Activated naive CD4-positive, alpha-beta T cell treated with anti-CD3 and anti-CD28 coated beads for 36 hours (primary cell): ENCODE measurements at regions of chr1 and their contacts with region 1.

Region 1: DNA sequence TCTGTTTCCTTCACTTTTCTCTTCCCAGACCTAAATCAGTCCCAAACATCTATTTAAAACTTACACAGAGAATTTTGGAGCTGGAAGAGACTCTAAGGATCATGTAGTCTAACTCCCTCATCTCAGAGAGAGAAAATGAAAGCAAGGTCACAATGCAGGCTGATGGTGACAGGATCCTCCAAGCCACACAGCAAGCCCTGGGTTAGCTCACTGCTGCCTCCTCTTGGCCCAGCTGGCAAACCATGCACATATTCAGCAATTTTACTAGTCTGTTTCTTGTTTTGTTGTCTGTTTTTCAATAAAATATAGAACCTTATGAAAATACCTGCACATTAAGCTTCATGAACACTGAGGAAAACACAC is 27.7 kb upstream of the LY9 start:
- DNase-seq: peak; percentile 96
- H3K4me3 Mint-ChIP-seq: peak overlapping the region; percentile 79
- H3K27ac Mint-ChIP-seq: peak overlapping the region; percentile 99
- H3K4me1 Mint-ChIP-seq: peaks cover 68% of the 10 kb centered on the region
- H3K27me3 Mint-ChIP-seq: no peaks in the 10 kb centered on the region

Region 2: DNA sequence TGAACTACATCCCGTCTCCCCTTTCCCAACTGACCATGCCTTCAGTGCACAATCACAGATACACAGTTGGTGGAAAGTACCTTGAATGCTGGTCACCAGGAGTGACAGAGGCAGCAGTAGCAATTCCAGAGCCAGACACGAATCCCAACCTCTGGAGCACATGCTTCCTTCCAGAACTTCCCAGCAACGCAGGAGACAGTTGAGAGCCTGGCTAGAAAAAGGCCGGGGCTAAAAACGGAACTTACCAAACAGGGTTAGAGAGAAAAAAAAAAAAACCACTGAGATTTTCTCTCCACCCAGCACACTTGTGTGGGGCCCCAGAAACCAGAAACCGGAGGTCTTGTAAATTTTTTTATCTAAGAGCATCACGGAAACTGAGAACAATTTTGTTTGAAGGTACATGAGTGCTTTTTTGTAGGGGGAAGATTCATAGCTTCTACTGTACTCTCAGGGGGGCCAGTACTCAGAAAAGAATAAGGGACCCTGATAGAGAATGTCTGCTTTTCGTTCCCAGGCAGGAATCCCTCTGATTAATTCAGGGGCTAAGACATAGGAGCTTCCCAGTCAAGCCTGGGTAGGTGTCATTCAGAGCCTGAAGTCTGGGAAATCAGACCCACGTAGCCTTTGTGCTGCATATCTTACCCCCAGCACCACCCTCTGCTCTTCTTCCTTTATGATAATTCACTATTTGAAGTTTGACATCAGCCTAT is 56.5 kb before region 1 on chr1 and contains the start of gene CD48:
- CTCF ChIA-PET with region 1: interaction called, 19 read pairs
- intact Hi-C with region 1: loop called (anchors 1 kb)
- DNase-seq: peak; percentile 70
- H3K4me3 Mint-ChIP-seq: no peak within 1 kb of the TSS
- H3K27ac Mint-ChIP-seq: no peak within 1 kb of the TSS
- H3K4me1 Mint-ChIP-seq: peaks cover 28% of the 10 kb centered on the region
- H3K27me3 Mint-ChIP-seq: no peaks in the 10 kb centered on the region
- total RNA-seq, gene CD48: 338 to 340 TPM

Region 3: GRCh38 chr1:160731990-160732389 is 36.3 kb before region 1 on chr1:
- CTCF ChIA-PET with region 1: interaction called, 174 read pairs
- intact Hi-C with region 1: loop called (anchors 1 kb)
- DNase-seq: no peak
- H3K4me3 Mint-ChIP-seq: no peak overlapping the region
- H3K27ac Mint-ChIP-seq: peak overlapping the region; percentile 90
- H3K4me1 Mint-ChIP-seq: peaks cover 48% of the 10 kb centered on the region
- H3K27me3 Mint-ChIP-seq: no peaks in the 10 kb centered on the region

Region 4: GRCh38 chr1:160748181-160748877 is 19.9 kb before region 1 on chr1:
- CTCF ChIA-PET with region 1: interaction called, 24 read pairs
- intact Hi-C with region 1: loop called (anchors 1 kb)
- DNase-seq: peak; percentile 28
- H3K4me3 Mint-ChIP-seq: no peak overlapping the region
- H3K27ac Mint-ChIP-seq: peak overlapping the region; percentile 81
- H3K4me1 Mint-ChIP-seq: peaks cover 94% of the 10 kb centered on the region
- H3K27me3 Mint-ChIP-seq: no peaks in the 10 kb centered on the region

Region 5: DNA sequence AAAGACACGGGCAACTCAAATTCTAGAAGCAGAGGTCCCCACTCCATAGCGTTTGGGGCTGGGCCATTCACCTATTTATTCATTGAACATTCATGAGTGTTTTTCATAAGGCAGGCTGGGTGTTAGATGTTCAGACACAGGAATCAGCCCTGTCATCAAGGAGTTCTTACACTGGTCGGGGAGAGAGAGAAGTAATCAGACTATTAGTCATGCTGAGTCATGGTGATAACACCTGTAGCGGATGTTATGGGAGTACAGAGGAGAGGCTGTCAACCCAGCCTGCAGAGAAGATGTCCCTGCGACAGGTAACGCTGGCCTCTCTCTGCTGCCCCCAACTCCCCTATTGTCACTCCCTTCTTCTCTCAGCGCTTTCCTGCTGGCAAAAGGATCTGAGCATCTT is 44.9 kb after region 1 on chr1:
- CTCF ChIA-PET with region 1: interaction called, 10 read pairs
- intact Hi-C with region 1: no loop called
- DNase-seq: peak; percentile 34
- H3K4me3 Mint-ChIP-seq: no peak overlapping the region
- H3K27ac Mint-ChIP-seq: peak overlapping the region; percentile 47
- H3K4me1 Mint-ChIP-seq: peaks cover 44% of the 10 kb centered on the region
- H3K27me3 Mint-ChIP-seq: no peaks in the 10 kb centered on the region